OCI-LY7 (cell line): ENCODE measurements at regions of chr18 and their contacts with region 1.

Region 1: GRCh38 chr18:24488824-24489493 is 28.5 kb downstream of the HRH4 start:
- DNase-seq: peak; percentile 67
- H3K4me3 ChIP-seq: no peak overlapping the region
- H3K27ac ChIP-seq: peak overlapping the region; percentile 8
- H3K4me1 ChIP-seq: peaks cover 44% of the 10 kb centered on the region
- CTCF ChIP-seq: peak; percentile 90

Region 2: GRCh38 chr18:24362758-24363157 is 126.2 kb before region 1 on chr18:
- CTCF ChIA-PET with region 1: no interaction called
- POLR2A ChIA-PET with region 1: interaction called, 3 read pairs
- intact Hi-C with region 1: loop called (anchors 5 kb)
- DNase-seq: no peak
- H3K4me3 ChIP-seq: no peak overlapping the region
- H3K27ac ChIP-seq: no peak overlapping the region
- H3K4me1 ChIP-seq: no peaks in the 10 kb centered on the region
- CTCF ChIP-seq: no peak

Region 3: GRCh38 chr18:24536326-24536725 is 47.4 kb after region 1 on chr18:
- CTCF ChIA-PET with region 1: no interaction called
- POLR2A ChIA-PET with region 1: no interaction called
- intact Hi-C with region 1: loop called (anchors 2 kb)
- DNase-seq: no peak
- H3K4me3 ChIP-seq: no peak overlapping the region
- H3K27ac ChIP-seq: no peak overlapping the region
- H3K4me1 ChIP-seq: no peaks in the 10 kb centered on the region
- CTCF ChIP-seq: no peak

Region 4: DNA sequence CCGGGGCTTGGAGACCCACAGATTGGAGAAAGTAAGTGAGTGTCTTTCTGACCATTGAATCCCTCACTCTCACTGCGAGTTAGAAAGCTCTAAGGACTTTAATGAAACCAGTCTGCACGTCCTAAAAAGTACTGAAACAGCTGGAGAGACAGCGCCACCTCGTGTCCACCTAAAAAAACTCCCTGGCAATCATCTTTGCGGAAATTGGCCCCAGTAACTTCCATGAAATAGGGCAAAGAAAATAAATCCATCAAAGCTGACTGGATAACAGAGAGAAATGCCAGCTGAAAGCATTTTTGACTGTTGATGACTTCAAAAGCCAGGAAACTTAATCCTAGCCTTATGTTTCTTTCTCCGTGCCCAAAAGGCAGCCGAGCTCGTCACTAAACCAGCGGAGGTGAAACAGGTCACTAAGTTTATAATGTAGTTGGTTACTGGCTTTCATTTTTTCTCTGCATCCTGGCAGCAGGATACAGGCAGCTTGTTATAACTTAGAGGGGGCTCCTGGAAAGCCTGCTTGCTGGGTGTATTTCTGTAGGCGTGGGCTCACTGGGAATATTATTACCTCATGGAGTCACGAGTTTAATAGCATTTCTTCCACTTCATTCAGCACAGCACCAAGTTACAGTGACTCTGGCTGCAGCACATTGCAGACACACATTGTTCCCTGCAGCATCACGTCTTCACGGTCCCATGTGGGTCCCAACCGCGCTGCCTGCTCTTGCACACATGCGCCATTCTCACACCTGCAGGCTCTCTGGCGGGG is 238.0 kb after region 1 on chr18:
- CTCF ChIA-PET with region 1: interaction called, 7 read pairs
- POLR2A ChIA-PET with region 1: interaction called, 4 read pairs
- intact Hi-C with region 1: loop called (anchors 1 kb)
- DNase-seq: peak; percentile 72
- H3K4me3 ChIP-seq: no peak overlapping the region
- H3K27ac ChIP-seq: no peak overlapping the region
- H3K4me1 ChIP-seq: no peaks in the 10 kb centered on the region
- CTCF ChIP-seq: peak; percentile 96

Region 5: DNA sequence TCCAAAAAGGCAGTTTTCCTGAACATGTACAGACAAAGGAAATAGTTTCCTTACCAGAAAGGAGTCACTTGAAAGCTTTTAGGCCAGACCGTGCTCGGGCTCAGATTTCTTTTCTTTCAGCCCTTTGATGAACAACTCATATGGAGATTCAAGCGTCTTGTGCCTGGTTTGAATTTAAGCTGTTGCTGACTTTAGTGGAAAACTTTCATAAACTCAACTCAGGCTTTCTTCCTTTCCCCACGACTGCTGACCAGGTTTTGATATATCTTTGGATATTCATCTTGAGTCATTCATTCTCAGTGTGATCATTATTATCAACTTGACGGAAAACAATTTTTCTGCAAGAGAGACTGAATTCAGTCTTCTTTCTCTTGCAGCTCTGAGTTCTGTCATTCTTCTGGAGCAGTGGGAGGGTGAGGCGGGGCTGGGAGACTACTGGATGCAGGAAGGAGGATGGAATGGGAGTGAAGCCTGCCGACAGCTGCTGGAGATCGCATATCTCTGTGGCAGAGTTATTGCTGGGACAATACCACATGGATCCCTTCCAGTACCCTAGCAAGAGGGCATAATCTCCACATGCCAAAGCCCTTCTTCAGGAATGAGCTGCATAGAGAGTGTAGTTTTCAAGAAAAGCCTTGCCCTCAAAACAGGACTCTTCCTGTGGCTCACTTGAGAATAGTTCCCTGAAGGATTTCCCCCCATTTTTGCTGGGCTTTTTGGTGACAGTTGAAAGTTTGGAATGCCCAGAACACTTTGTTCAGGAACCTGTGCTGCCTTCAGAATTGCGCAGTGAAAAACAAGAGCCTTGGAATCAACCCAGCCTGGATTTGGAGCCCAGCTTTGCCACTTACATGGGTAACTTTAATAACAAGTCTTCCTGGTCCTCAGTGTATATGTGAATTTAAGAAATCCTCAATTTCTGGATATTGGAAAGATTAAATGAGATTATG is 498.6 kb after region 1 on chr18:
- CTCF ChIA-PET with region 1: no interaction called
- POLR2A ChIA-PET with region 1: no interaction called
- intact Hi-C with region 1: no loop called
- DNase-seq: no peak
- H3K4me3 ChIP-seq: no peak overlapping the region
- H3K27ac ChIP-seq: no peak overlapping the region
- H3K4me1 ChIP-seq: peaks cover 5% of the 10 kb centered on the region
- CTCF ChIP-seq: no peak